Tibial artery (tissue), 4 donors: ENCODE measurements at regions of chr5 and their contacts with region 1.

Region 1: DNA sequence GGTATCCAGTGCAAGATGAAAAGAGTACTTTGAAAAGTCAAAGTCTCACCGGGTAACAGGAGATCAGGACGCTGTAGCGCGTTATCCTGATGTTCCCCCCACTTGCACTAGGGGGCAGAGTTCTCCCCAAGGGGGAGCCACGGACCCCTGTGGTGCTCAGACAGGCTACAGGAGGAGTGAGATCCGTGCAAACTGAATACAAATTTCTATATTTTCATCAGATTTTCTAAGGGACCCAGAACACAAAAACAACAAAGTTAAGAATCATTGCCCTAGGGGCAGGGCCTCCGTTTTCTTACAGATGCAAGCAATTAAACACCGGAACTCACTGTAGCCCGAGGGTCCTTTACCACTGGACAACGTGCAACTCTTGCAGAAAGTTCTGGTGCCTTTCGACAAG is 2.0 kb downstream of the MYO10 start:
- DNase-seq: peak; percentile 37 to 72
- H3K4me3 ChIP-seq: peak overlapping the region; percentile 75 to 92
- H3K27ac ChIP-seq: no peak overlapping the region
- H3K4me1 ChIP-seq: peaks cover 0 to 33% (median 17%) of the 10 kb centered on the region in 4 donors
- H3K27me3 ChIP-seq: no peaks in the 10 kb centered on the region
- CTCF ChIP-seq: peak; percentile 69 to 81

Region 2: DNA sequence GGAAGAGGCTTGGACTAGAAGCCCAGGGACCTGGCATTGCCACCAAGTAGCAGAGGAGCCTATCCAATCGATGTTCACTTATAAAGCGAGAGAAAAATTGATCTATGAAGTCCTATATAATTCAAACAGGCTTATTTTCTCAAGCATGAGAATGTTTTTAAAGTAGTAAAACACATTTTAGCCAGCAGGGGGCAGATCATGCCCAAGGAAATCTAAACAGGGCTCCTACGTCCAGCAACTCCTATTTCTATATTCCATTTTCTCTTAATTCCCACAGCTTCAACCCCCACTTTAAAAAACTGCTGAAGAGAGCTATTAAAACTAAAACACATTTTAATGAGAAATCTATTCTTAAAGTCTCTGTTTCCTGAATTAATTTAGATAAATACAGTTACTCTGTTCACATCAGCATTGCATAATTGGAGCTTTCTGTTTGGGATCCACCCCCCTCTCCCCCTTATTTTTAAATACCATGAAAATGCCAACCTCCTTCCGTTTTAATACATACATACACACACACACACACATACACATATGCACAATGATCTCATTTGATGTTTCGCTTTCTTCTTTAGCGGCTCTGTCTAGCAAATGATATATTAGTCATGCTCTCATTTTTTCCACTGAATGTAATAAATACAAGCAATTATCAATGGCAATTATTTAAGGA is 143.0 kb before region 1 on chr5:
- intact Hi-C with region 1: loop called (anchors 10 kb)
- DNase-seq: no peak
- H3K4me3 ChIP-seq: no peak overlapping the region
- H3K27ac ChIP-seq: no peak overlapping the region
- H3K4me1 ChIP-seq: peaks cover 0 to 6% (median 2%) of the 10 kb centered on the region in 4 donors
- H3K27me3 ChIP-seq: no peaks in the 10 kb centered on the region
- CTCF ChIP-seq: peak; percentile 70 to 79

Region 3: DNA sequence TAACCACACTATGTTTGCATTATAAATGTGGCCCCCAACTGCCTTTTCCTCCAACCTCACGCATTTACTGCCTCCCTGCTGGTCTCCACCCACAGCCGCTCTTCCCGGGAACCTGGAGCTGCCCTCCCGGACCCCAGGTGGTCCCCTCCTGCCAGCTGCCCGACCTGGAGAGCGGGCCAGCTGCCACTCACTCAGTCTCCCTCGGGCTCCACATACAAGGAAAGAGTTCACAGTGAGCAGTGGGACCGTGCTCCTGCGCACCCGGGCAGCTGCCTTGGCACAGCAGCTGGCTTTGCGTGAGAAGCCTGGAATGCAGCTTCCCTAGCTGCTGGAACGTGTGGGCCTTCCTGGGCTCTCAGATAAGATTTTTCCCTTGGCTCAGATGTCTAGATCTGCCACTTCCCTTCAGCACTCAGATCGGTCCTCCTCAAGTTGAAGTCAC is 67.3 kb before region 1 on chr5:
- intact Hi-C with region 1: loop called (anchors 10 kb)
- DNase-seq: peak in 1 of 2 donors; percentile 76
- H3K4me3 ChIP-seq: peak overlapping the region in 1 of 2 donors; percentile 19
- H3K27ac ChIP-seq: peak overlapping the region; percentile 59 to 77
- H3K4me1 ChIP-seq: peaks cover 0 to 85% (median 42%) of the 10 kb centered on the region in 4 donors
- H3K27me3 ChIP-seq: no peaks in the 10 kb centered on the region
- CTCF ChIP-seq: no peak

Region 4: GRCh38 chr5:17132444-17133083 is 198.4 kb after region 1 on chr5:
- intact Hi-C with region 1: loop called (anchors 5 kb)
- DNase-seq: no peak
- H3K4me3 ChIP-seq: no peak overlapping the region
- H3K27ac ChIP-seq: no peak overlapping the region
- H3K4me1 ChIP-seq: peaks cover 0 to 26% (median 3%) of the 10 kb centered on the region in 4 donors
- H3K27me3 ChIP-seq: no peaks in the 10 kb centered on the region
- CTCF ChIP-seq: peak; percentile 64 to 69